Dendritic cell treated with granulocyte-macrophage colony-stimulating factor and Interleukin-4, amounts not matched to agents 40 ng/mL and 50 ng/mL, for 4 days (primary cell): ENCODE measurements at regions of chr16 and their contacts with region 1.

Region 1: GRCh38 chr16:53852678-53853077 is 148.7 kb downstream of the FTO start:
- H3K4me3 Mint-ChIP-seq: no peak overlapping the region
- H3K27ac Mint-ChIP-seq: no peak overlapping the region
- H3K4me1 Mint-ChIP-seq: peaks cover 23% of the 10 kb centered on the region
- H3K27me3 Mint-ChIP-seq: no peaks in the 10 kb centered on the region

Region 2: GRCh38 chr16:53789137-53789536 is 63.5 kb before region 1 on chr16:
- intact Hi-C with region 1: no loop called
- H3K4me3 Mint-ChIP-seq: no peak overlapping the region
- H3K27ac Mint-ChIP-seq: no peak overlapping the region
- H3K4me1 Mint-ChIP-seq: no peaks in the 10 kb centered on the region
- H3K27me3 Mint-ChIP-seq: no peaks in the 10 kb centered on the region

Region 3: GRCh38 chr16:53913099-53913870 is 60.6 kb after region 1 on chr16:
- intact Hi-C with region 1: loop called (anchors 10 kb)
- H3K4me3 Mint-ChIP-seq: no peak overlapping the region
- H3K27ac Mint-ChIP-seq: no peak overlapping the region
- H3K4me1 Mint-ChIP-seq: peaks cover 7% of the 10 kb centered on the region
- H3K27me3 Mint-ChIP-seq: no peaks in the 10 kb centered on the region